ENCODE measurements at regions of chr18 and their contacts with region 1.

Region 1: GRCh38 chr18:30288662-30289414 is 753.7 kb downstream of the DSC3 start:
- DNase-seq: no peak
- ATAC-seq: no peak
- H3K4me3 ChIP-seq: no peak overlapping the region
- H3K27ac ChIP-seq: no peak overlapping the region
- H3K4me1 ChIP-seq: no peaks in the 10 kb centered on the region
- H3K27me3 ChIP-seq: no peaks in the 10 kb centered on the region
- CTCF ChIP-seq: no peak

Region 2: GRCh38 chr18:30254331-30254730 is 34.5 kb before region 1 on chr18:
- intact Hi-C with region 1: loop called in 1 of 10 experiments (anchors 5 kb)
- DNase-seq: no peak
- ATAC-seq: no peak
- H3K4me3 ChIP-seq: no peak overlapping the region
- H3K27ac ChIP-seq: no peak overlapping the region
- H3K4me1 ChIP-seq: no peaks in the 10 kb centered on the region
- H3K27me3 ChIP-seq: no peaks in the 10 kb centered on the region
- CTCF ChIP-seq: no peak